Activated CD4-positive, alpha-beta T cell treated with anti-CD3 and anti-CD28 coated beads, Interleukin-2, amount 10 ng/mL, durations not matched to agents 24 days and 14 days (primary cell): ENCODE measurements at regions of chr2 and their contacts with region 1.

Region 1: GRCh38 chr2:40032650-40033319 is 253.7 kb upstream of the THUMPD2 start:
- DNase-seq: no peak
- H3K4me3 Mint-ChIP-seq: no peak overlapping the region
- H3K27ac Mint-ChIP-seq: peak overlapping the region; percentile 64
- H3K4me1 Mint-ChIP-seq: peaks cover 17% of the 10 kb centered on the region
- H3K27me3 Mint-ChIP-seq: no peaks in the 10 kb centered on the region

Region 2: DNA sequence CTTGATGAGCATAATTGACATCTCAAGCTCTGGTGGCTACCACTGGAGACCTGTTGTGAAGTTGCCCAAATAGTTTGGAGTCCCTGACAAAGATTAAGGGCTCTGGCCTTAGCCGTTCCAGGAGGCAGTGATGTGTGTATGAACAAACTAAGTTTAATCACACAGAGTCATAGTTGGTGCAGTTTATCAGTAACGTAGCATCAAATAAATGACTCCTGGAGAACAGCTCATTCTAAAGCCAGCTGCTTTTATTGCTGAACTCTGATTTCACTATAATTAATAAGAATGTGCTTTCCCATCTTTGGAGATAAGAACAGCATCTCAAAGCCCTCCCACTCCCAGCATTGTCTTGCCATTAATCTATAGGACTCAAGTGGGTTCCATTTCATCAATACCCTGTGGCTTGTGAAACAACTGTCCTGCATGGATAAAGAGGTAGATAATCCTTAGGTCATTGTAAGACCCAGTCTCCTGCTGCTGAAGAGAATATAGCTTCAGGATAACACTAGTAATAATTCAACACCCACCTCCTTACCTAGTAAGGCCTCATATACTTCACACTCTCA is 42.4 kb before region 1 on chr2:
- intact Hi-C with region 1: no loop called
- DNase-seq: no peak
- H3K4me3 Mint-ChIP-seq: no peak overlapping the region
- H3K27ac Mint-ChIP-seq: no peak overlapping the region
- H3K4me1 Mint-ChIP-seq: peaks cover 7% of the 10 kb centered on the region
- H3K27me3 Mint-ChIP-seq: no peaks in the 10 kb centered on the region

Region 3: GRCh38 chr2:40210344-40210967 is 177.7 kb after region 1 on chr2:
- intact Hi-C with region 1: loop called (anchors 2 kb)
- DNase-seq: no peak
- H3K4me3 Mint-ChIP-seq: no peak overlapping the region
- H3K27ac Mint-ChIP-seq: peak overlapping the region; percentile 48
- H3K4me1 Mint-ChIP-seq: peaks cover 20% of the 10 kb centered on the region
- H3K27me3 Mint-ChIP-seq: no peaks in the 10 kb centered on the region